ENCODE measurements at regions of chr15 and their contacts with region 1.

Region 1: DNA sequence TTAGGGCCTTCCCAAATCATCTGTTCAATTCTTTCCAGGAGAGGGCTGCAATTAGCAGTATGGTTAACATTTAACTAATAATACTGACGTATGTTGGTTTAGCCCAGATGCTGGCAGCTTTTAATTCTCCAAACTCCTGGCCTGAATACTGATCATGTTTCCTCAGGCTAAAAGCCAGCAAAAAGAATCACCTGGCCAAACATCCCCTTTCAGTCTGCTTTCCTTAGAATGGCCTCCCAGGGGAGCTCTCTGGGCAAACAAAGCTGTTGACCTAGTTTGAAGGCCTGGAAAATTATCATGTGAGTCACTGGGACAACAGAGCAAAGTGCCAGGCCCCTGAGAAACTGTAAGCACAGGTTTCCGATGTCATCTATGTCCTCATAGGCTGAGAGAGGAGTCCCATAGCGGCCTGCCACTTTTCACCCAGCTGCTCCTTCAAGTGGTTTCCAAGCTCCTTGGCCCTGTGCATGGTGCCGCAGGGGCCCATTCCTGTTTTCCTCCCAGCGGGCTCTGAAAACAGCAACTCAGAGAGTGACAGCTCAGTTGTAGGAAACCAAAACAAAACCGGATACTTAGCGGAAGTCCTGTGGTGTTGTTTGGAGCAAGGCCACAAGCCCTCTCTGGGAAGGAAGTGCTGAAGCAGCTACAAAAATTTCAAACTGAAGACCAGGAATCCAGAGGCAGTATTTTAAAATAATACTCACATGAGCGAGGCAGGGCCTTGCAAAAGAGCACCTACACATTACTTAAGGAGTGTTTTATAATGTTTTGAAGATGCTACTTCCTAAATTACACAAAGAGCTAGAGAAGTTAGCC is 36.5 kb upstream of the RAB11A start:
- DNase-seq: peak; percentile 27 to 73 (median 48)
- ATAC-seq: peak; percentile 57 to 60
- H3K4me3 Mint-ChIP-seq: peak overlapping the region; percentile 69 to 91 (median 81)
- H3K27ac Mint-ChIP-seq: peak overlapping the region; percentile 92 to 98 (median 96)
- H3K4me1 Mint-ChIP-seq: peaks cover 24 to 65% (median 51%) of the 10 kb centered on the region in 4 donors
- H3K27me3 Mint-ChIP-seq: no peaks in the 10 kb centered on the region

Region 2: GRCh38 chr15:65818927-65819562 is 13.7 kb before region 1 on chr15:
- POLR2A ChIA-PET with region 1: interaction called, 46 read pairs
- DNase-seq: peak in 6 of 10 donors; percentile 28 to 93 (median 76)
- ATAC-seq: peak; percentile 91 to 95
- H3K4me3 Mint-ChIP-seq: peak overlapping the region; percentile 13 to 90 (median 75)
- H3K27ac Mint-ChIP-seq: peak overlapping the region; percentile 94 to 99 (median 98)
- H3K4me1 Mint-ChIP-seq: peaks cover 16 to 76% (median 51%) of the 10 kb centered on the region in 4 donors
- H3K27me3 Mint-ChIP-seq: no peaks in the 10 kb centered on the region

Measured in naive thymus-derived CD8-positive, alpha-beta T cell (primary cell).